ENCODE measurements at regions of chr7 and their contacts with region 1.

Region 1: DNA sequence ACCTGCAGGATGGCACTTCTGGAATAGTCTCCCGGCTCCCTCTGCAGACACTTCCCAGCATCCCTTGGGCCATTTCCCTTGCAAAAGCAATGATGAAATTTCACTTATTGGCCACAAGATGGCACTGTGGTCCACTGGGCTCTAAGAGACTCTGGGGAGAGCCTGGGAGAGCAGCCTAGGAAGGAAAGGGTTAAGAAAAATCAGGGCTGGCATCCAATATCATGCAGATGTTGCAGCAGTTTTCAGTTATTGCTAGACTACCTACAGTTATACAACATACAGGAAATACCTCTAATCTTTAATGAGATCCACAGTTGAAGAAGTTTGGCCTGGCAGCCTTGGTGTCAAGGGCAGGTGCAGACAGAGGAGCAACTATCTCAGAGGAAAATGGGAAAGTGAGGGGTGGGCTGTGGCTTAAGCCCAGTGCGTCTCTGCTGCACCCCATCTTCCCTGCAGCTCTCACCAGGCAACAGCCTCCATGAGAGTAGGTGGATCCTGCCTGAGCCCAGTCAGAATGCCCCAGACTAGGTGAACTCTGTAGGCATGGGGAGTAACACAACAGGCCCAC is 100.2 kb upstream of the PRSS58 start:
- DNase-seq: peak; percentile 49
- CTCF ChIP-seq: peak; percentile 81

Region 2: DNA sequence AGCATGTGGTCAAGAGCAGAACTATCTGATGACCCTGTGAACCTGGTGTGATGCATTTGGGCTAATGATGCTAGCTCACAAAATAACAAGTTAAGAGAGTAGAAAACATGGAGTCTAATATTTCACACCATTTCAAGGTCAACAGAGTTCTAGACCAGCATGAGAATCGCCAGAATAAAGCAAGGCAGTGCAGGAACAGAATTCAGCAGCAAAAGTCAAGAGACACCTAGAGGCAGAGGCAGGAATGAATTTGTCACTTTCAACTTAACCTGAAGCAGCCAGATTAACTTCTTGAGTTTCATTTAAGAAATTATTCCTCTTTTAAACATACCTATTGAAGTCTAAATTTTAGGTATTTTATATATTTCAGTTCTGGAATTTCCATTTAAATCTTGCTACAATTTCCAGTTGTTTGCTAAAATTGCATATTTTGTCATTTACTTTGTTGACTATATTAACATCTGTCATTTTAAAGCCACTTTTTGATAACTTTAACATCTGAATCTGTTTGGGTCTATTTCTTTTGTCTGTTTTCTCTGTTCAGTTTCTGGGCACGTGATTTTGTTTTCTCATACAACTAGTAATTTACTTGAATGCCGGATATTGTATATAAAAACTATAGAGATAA is 56.0 kb before region 1 on chr7:
- in situ Hi-C with region 1: loop called (anchors 10 kb)
- DNase-seq: peak; percentile 42
- CTCF ChIP-seq: peak; percentile 60

Region 3: DNA sequence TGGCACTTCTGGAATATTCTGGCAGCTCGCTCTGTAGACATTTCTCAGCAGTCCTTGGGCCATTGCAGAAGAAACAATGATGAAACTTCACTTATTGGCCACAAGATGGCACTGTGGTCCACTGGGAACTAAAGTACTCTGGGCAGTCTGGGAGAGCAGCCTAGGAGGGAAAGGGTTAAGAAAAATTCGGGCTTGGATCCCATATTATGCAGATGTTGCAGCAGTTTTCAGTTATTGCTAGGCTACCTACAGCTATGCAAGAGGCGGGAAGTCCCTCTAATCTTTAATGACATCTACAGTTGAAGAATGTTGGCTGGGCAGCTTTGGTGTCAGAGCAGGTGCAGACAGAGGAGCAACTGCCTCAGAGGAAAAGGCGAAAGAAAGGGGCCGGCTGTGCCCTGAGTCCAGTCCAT is 101.5 kb after region 1 on chr7:
- in situ Hi-C with region 1: no loop called
- DNase-seq: peak; percentile 40
- CTCF ChIP-seq: peak; percentile 84